ENCODE measurements at regions of chr11 and their contacts with region 1.

Region 1: GRCh38 chr11:115170133-115170815 is 333.9 kb downstream of the CADM1 start:
- DNase-seq: no peak
- H3K4me3 Mint-ChIP-seq: no peak overlapping the region
- H3K27ac Mint-ChIP-seq: no peak overlapping the region
- H3K4me1 Mint-ChIP-seq: no peaks in the 10 kb centered on the region
- H3K27me3 Mint-ChIP-seq: peaks cover 15% of the 10 kb centered on the region

Region 2: GRCh38 chr11:115244758-115245157 is 74.5 kb after region 1 on chr11:
- intact Hi-C with region 1: loop called (anchors 5 kb)
- DNase-seq: no peak
- H3K4me3 Mint-ChIP-seq: no peak overlapping the region
- H3K27ac Mint-ChIP-seq: no peak overlapping the region
- H3K4me1 Mint-ChIP-seq: no peaks in the 10 kb centered on the region
- H3K27me3 Mint-ChIP-seq: peaks cover 20% of the 10 kb centered on the region

Region 3: DNA sequence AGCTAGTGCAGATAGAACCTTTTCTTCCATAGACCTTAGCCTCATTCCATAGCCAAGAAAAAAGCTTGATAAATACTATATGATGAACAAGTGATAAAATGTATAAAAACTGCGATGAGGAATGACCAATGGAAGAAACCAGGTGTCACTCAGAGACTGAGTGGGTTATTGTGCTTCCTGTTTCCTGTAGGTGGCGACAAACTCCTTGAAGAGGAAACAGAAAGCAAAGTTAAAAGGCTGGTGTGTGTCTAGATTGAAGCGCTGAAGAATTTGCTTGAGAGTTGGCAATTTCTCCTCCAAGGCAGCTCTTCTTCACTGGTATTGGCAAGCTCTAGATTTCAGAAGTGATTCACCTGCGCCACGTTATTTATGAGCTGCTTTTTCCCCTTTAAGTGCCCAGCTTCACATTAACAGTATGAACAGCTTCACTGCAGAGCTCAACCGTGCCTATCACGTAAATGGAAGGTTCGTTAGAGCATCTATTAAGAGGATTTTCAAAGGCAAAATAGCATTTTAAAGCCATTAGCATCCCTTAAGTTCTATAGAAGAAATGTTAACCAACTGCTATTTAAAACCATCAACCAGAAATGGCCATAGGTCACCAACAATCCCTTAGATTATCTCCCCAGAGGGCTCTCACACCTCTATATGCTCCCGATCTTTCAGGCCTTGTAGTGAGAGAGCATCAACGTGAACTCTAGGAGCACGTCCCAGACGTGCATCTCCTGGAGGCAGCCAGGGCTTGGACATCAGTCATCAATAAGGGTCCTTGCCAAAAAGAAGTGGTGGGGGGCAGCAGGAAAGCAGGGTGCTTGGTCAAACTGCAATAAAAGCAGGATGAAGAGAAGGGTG is 154.5 kb after region 1 on chr11:
- intact Hi-C with region 1: loop called (anchors 10 kb)
- DNase-seq: no peak
- H3K4me3 Mint-ChIP-seq: no peak overlapping the region
- H3K27ac Mint-ChIP-seq: no peak overlapping the region
- H3K4me1 Mint-ChIP-seq: peaks cover 2% of the 10 kb centered on the region
- H3K27me3 Mint-ChIP-seq: peaks cover 3% of the 10 kb centered on the region